Pancreas (tissue), 10 donors: ENCODE measurements at regions of chr3 and their contacts with region 1.

Region 1: GRCh38 chr3:150787741-150788370 is 24.9 kb upstream of the SIAH2 start:
- DNase-seq: peak; percentile 70 to 94 (median 83)
- ATAC-seq: peak; percentile 85 to 99 (median 96)
- H3K4me3 ChIP-seq: no peak overlapping the region
- H3K27ac ChIP-seq: no peak overlapping the region
- H3K4me1 ChIP-seq: no peaks in the 10 kb centered on the region
- H3K27me3 ChIP-seq: no peaks in the 10 kb centered on the region
- CTCF ChIP-seq: peak; percentile 79 to 93 (median 88)

Region 2: GRCh38 chr3:150721285-150722130 is 66.3 kb before region 1 on chr3:
- intact Hi-C with region 1: loop called in 1 of 3 experiments (anchors 10 kb)
- DNase-seq: no peak
- ATAC-seq: peak; percentile 69 to 96 (median 90)
- H3K4me3 ChIP-seq: no peak overlapping the region
- H3K27ac ChIP-seq: no peak overlapping the region
- H3K4me1 ChIP-seq: no peaks in the 10 kb centered on the region
- H3K27me3 ChIP-seq: no peaks in the 10 kb centered on the region
- CTCF ChIP-seq: peak; percentile 43 to 84 (median 66)

Region 3: DNA sequence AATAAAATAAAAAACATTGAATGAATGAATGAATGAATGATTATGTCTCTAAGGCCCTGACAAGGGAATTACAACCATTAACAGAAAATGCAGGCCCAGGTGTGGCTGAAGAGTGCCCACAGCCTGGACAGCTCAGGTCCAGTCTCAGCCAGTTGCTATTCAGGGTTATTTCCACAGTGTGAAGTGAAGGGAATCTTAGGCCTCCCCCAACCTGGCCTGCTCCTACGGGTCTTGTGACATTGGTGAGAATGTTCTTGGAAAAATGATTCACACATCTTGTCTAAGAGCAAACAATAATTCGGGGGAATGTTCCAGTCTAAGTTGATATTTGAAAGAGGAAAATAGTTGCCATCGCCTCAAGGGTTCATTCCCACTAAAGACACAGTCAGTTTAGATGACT is 80.4 kb after region 1 on chr3:
- intact Hi-C with region 1: loop called in 1 of 3 experiments (anchors 5 kb)
- DNase-seq: no peak
- ATAC-seq: peak in 1 of 4 donors; percentile 23
- H3K4me3 ChIP-seq: no peak overlapping the region
- H3K27ac ChIP-seq: no peak overlapping the region
- H3K4me1 ChIP-seq: no peaks in the 10 kb centered on the region
- H3K27me3 ChIP-seq: no peaks in the 10 kb centered on the region
- CTCF ChIP-seq: no peak

Region 4: GRCh38 chr3:151146071-151146730 is 358.3 kb after region 1 on chr3:
- intact Hi-C with region 1: loop called in 2 of 3 experiments (anchors 5 to 10 kb)
- DNase-seq: peak; percentile 52 to 80 (median 59)
- ATAC-seq: peak; percentile 93 to 100 (median 99)
- H3K4me3 ChIP-seq: no peak overlapping the region
- H3K27ac ChIP-seq: no peak overlapping the region
- H3K4me1 ChIP-seq: peaks cover 0 to 5% (median 0%) of the 10 kb centered on the region in 3 donors
- H3K27me3 ChIP-seq: no peaks in the 10 kb centered on the region
- CTCF ChIP-seq: peak; percentile 75 to 85 (median 82)